GM12878 (cell line): ENCODE measurements at regions of chr1 and their contacts with region 1.

Region 1: GRCh38 chr1:15885701-15886610 is 38.4 kb downstream of the SPEN start:
- DNase-seq: peak; percentile 36
- ATAC-seq: peak; percentile 65
- H3K4me3 ChIP-seq: peak overlapping the region; percentile 46; the same call in 1 of the 2 replicates
- H3K27ac ChIP-seq: peak overlapping the region; percentile 87
- H3K4me1 ChIP-seq: peaks cover 24% of the 10 kb centered on the region
- H3K27me3 ChIP-seq: no peaks in the 10 kb centered on the region
- CTCF ChIP-seq: no peak
- EP300 ChIP-seq: no peak
- POLR2A ChIP-seq: peak; percentile 37; the same call in 1 of the 2 replicates
- RAD21 ChIP-seq: no peak

Region 2: GRCh38 chr1:15858069-15858670 is 27.8 kb before region 1 on chr1:
- CTCF ChIA-PET with region 1: interaction called, 3 read pairs
- POLR2A ChIA-PET with region 1: interaction called, 13 read pairs
- RAD21 ChIA-PET with region 1: interaction called, 5 read pairs
- SMC1A ChIA-PET with region 1: interaction called, 8 read pairs
- in situ Hi-C with region 1: no loop called
- intact Hi-C with region 1: no loop called
- DNase-seq: no peak
- ATAC-seq: peak; percentile 54
- H3K4me3 ChIP-seq: no peak overlapping the region
- H3K27ac ChIP-seq: no peak overlapping the region
- H3K4me1 ChIP-seq: peaks cover 8% of the 10 kb centered on the region
- H3K27me3 ChIP-seq: no peaks in the 10 kb centered on the region
- CTCF ChIP-seq: no peak
- EP300 ChIP-seq: no peak
- POLR2A ChIP-seq: no peak
- RAD21 ChIP-seq: no peak

Region 3: DNA sequence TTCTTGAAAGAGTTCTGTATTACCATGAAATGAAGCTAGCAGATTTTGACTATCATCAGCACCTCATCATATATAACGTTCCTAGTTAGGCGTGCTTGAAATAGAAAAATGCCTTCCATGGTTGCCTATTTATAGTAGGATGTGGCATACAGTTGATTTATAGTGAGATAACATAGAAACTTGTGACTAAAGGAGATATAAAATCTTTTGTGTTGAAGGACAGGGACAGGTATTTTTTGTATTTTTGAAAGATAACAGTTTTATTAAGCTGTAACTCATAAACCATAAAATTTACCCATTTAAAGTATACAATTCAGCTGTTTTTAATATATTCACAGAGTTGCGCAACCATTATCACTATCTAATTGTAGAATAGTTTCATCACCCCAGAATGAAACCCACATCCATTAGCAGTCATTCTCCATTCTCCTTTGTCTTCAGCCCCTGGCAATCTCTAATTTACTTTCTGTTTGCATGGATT is 19.2 kb before region 1 on chr1:
- CTCF ChIA-PET with region 1: no interaction called
- POLR2A ChIA-PET with region 1: interaction called, 3 read pairs
- RAD21 ChIA-PET with region 1: interaction called, 6 read pairs
- SMC1A ChIA-PET with region 1: interaction called, 11 read pairs
- in situ Hi-C with region 1: no loop called
- intact Hi-C with region 1: no loop called
- DNase-seq: no peak
- ATAC-seq: no peak
- H3K4me3 ChIP-seq: no peak overlapping the region
- H3K27ac ChIP-seq: no peak overlapping the region
- H3K4me1 ChIP-seq: no peaks in the 10 kb centered on the region
- H3K27me3 ChIP-seq: no peaks in the 10 kb centered on the region
- CTCF ChIP-seq: no peak
- EP300 ChIP-seq: no peak
- POLR2A ChIP-seq: no peak
- RAD21 ChIP-seq: no peak